HEK293 (cell line): ENCODE measurements at regions of chr12 and their contacts with region 1.

Region 1: GRCh38 chr12:107131832-107132616 is 38.7 kb upstream of the CRY1 start:
- H3K4me3 ChIP-seq: no peak overlapping the region
- H3K27ac ChIP-seq: no peak overlapping the region
- H3K4me1 ChIP-seq: no peaks in the 10 kb centered on the region
- CTCF ChIP-seq: peak; percentile 63; the same call in 1 of the 2 replicates

Region 2: GRCh38 chr12:107145397-107145796 is 13.4 kb after region 1 on chr12:
- CTCF ChIA-PET with region 1: interaction called, 16 read pairs
- POLR2A ChIA-PET with region 1: no interaction called
- H3K4me3 ChIP-seq: no peak overlapping the region
- H3K27ac ChIP-seq: no peak overlapping the region
- H3K4me1 ChIP-seq: no peaks in the 10 kb centered on the region
- CTCF ChIP-seq: no peak

Region 3: GRCh38 chr12:107328442-107329133 is 196.6 kb after region 1 on chr12:
- CTCF ChIA-PET with region 1: interaction called, 17 read pairs
- POLR2A ChIA-PET with region 1: no interaction called
- H3K4me3 ChIP-seq: no peak overlapping the region
- H3K27ac ChIP-seq: no peak overlapping the region
- H3K4me1 ChIP-seq: peaks cover 14% of the 10 kb centered on the region
- CTCF ChIP-seq: no peak

Region 4: GRCh38 chr12:107597695-107598410 is 465.8 kb after region 1 on chr12:
- CTCF ChIA-PET with region 1: interaction called, 11 read pairs
- POLR2A ChIA-PET with region 1: no interaction called
- H3K4me3 ChIP-seq: no peak overlapping the region
- H3K27ac ChIP-seq: no peak overlapping the region
- H3K4me1 ChIP-seq: no peaks in the 10 kb centered on the region
- CTCF ChIP-seq: no peak

Region 5: DNA sequence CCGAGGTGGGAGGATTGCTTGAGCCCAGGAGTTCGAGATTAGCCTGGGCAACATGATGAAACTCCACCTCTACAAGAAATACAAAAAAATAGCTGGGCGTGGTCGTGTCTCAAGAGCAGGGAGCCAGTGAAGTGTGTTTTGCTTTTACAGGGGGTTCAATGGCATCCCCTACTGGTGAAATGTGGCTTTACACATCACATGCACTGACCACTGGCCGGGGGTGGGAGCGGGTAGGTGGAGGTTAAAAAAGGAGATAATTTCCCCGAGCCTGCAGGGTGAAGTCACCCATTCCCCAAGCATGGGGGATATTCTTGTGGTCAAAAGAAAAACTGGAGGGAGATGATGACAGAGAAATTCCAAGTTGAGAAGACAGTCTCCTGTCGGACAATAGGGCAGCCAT is 490.0 kb after region 1 on chr12:
- CTCF ChIA-PET with region 1: interaction called, 21 read pairs
- POLR2A ChIA-PET with region 1: no interaction called
- H3K4me3 ChIP-seq: no peak overlapping the region
- H3K27ac ChIP-seq: no peak overlapping the region
- H3K4me1 ChIP-seq: no peaks in the 10 kb centered on the region
- CTCF ChIP-seq: peak; percentile 37; the same call in 1 of the 2 replicates